Heart right ventricle (tissue), 16 donors: ENCODE measurements at regions of chr7 and their contacts with region 1.

Region 1: GRCh38 chr7:40329601-40330153 is 194.9 kb downstream of the SUGCT start:
- DNase-seq: no peak
- ATAC-seq: peak in 5 of 8 donors; percentile 29 to 58 (median 45)
- H3K4me3 ChIP-seq: no peak overlapping the region
- H3K27ac ChIP-seq: no peak overlapping the region
- H3K4me1 ChIP-seq: peaks cover 0 to 4% (median 0%) of the 10 kb centered on the region in 9 donors
- H3K27me3 ChIP-seq: no peaks in the 10 kb centered on the region
- CTCF ChIP-seq: peak; percentile 55 to 82 (median 79)

Region 2: GRCh38 chr7:40604601-40605438 is 275.1 kb after region 1 on chr7:
- intact Hi-C with region 1: loop called in 3 of 10 experiments (anchors 5 to 10 kb)
- DNase-seq: peak; percentile 21 to 45
- ATAC-seq: peak; percentile 67 to 90 (median 74)
- H3K4me3 ChIP-seq: no peak overlapping the region
- H3K27ac ChIP-seq: no peak overlapping the region
- H3K4me1 ChIP-seq: peaks cover 0 to 7% (median 0%) of the 10 kb centered on the region in 9 donors
- H3K27me3 ChIP-seq: no peaks in the 10 kb centered on the region
- CTCF ChIP-seq: peak; percentile 32 to 75 (median 63)

Region 3: DNA sequence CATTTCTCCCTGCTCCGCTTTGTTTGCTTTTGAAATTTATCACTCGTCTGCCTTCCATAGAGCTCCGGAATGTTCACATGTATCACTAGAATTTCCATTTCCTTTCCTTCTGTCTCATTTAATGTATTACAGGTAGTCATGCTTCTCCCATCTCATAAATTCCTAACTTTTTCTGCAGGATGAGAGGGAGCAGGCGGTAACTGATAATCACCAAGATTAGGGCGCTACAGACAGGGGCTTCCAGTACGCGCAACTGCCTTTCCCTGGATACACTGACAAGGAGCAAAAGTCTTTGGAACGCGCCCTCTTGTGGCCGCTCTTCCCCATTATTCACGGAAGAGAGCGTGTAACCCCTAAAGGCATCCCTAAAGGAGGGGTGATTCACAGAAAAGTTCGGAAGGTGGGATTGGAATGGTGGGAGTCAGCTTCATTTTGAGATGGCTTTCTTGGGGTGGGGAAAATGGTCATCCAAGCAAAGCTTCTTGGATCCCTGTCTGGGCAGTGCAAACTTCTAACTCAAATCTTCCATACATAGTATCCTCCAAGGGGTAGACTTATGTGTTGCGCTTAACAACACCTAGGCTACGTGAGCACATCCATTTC is 1366.7 kb after region 1 on chr7:
- intact Hi-C with region 1: loop called in 3 of 10 experiments (anchors 2 to 10 kb)
- DNase-seq: peak; percentile 72 to 79
- ATAC-seq: peak; percentile 67 to 83 (median 74)
- H3K4me3 ChIP-seq: peak overlapping the region in 8 of 10 donors; percentile 21 to 64 (median 50)
- H3K27ac ChIP-seq: peak overlapping the region in 7 of 10 donors; percentile 24 to 82 (median 54)
- H3K4me1 ChIP-seq: peaks cover 0 to 55% (median 29%) of the 10 kb centered on the region in 9 donors
- H3K27me3 ChIP-seq: peaks cover 0 to 20% (median 5%) of the 10 kb centered on the region in 7 donors
- CTCF ChIP-seq: peak; percentile 55 to 79 (median 74)

Region 4: DNA sequence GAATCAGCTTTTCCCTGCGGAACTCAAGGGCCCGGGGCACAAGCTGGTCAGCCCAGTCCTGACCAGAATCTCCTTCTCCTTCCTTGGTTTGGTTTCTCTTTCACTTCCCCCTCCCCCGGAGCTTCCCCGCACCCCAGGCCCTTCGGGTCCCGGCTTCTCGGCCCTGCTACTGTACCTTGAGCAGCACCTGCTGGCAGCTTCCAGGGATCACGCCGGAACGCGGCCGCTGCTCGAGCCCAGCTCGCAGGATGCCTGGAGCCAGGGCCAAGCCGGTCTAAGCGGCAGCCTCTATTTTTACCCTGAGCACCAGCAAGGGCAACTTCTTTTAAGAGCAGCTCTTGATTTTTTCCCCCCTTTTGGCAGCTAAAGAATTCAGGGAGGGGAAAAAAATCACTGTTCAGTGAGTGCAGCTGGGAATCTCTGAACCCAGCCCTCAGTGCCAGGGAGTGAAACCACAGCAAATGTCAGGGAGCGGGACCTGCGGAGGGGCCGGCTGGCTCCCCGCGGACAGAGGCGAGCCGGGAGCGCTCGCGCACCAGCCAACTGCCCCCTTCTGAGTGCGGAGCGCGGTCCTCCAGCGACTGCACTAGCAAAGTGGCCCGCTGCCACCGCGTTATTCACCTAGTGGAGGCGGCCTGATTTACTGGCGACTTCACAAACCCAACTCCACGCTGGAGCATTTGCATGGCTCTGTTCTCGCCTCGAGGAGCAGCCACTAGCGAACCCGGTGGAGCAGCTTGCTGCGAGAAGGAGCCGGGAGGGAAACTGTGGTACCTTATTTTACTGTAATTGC is 1375.6 kb after region 1 on chr7:
- intact Hi-C with region 1: loop called in 6 of 10 experiments (anchors 2 to 10 kb)
- DNase-seq: peak; percentile 82 to 86
- ATAC-seq: peak; percentile 87 to 98 (median 94)
- H3K4me3 ChIP-seq: peak overlapping the region; percentile 7 to 65 (median 56)
- H3K27ac ChIP-seq: peak overlapping the region in 9 of 10 donors; percentile 10 to 88 (median 78)
- H3K4me1 ChIP-seq: peaks cover 0 to 24% (median 7%) of the 10 kb centered on the region in 9 donors
- H3K27me3 ChIP-seq: peaks cover 0 to 7% (median 0%) of the 10 kb centered on the region in 7 donors
- CTCF ChIP-seq: peak; percentile 30 to 78 (median 68)

Region 5: DNA sequence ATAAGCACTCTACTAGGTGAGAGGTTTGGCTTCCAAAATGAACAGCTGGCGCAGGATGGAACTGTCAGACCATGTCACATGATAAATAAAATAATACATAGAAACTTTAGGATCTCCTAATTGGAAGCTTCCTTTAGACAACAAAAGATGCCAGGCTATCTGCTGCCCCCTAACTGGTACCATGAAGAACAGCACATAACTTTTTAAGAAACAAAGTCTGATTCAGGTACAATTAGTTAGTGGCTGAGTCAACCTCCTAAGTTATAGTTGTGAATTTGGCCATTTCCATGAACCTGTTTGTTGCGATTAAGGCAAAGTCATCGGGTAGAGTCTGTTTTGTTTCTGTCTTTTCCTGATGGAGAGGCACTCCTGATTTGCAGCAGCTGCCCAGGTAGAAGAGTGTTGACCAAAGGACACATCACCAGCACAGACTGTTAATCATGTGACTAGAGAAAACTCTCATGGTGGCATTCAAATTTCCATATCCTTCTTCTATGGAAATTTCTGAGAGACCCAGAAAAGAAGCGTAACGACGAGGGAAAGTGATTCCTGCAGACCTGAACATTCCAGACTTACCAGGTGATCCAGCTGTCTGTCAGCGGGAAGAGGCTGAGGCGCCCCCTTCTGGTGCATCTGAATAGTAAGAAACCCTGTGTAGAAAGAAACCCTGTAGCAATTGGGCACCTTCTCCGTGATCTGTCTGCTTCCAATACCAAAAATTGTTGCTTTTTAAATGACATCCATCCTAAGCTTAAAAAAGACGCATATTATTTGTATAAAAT is 1381.8 kb after region 1 on chr7:
- intact Hi-C with region 1: loop called in 7 of 10 experiments (anchors 2 to 10 kb)
- DNase-seq: no peak
- ATAC-seq: no peak
- H3K4me3 ChIP-seq: no peak overlapping the region
- H3K27ac ChIP-seq: no peak overlapping the region
- H3K4me1 ChIP-seq: peaks cover 0 to under 1% (median 0%) of the 10 kb centered on the region in 9 donors
- H3K27me3 ChIP-seq: no peaks in the 10 kb centered on the region
- CTCF ChIP-seq: peak in 7 of 9 donors; percentile 18 to 55 (median 40)

Region 6: GRCh38 chr7:41716691-41717090 is 1387.0 kb after region 1 on chr7:
- intact Hi-C with region 1: loop called in 7 of 10 experiments (anchors 2 to 10 kb)
- DNase-seq: no peak
- ATAC-seq: no peak
- H3K4me3 ChIP-seq: no peak overlapping the region
- H3K27ac ChIP-seq: no peak overlapping the region
- H3K4me1 ChIP-seq: no peaks in the 10 kb centered on the region
- H3K27me3 ChIP-seq: no peaks in the 10 kb centered on the region
- CTCF ChIP-seq: no peak

Region 7: GRCh38 chr7:41725013-41725412 is 1395.3 kb after region 1 on chr7:
- intact Hi-C with region 1: loop called in 1 of 10 experiments (anchors 10 kb)
- DNase-seq: no peak
- ATAC-seq: no peak
- H3K4me3 ChIP-seq: no peak overlapping the region
- H3K27ac ChIP-seq: no peak overlapping the region
- H3K4me1 ChIP-seq: no peaks in the 10 kb centered on the region
- H3K27me3 ChIP-seq: peaks cover 0 to 2% (median 0%) of the 10 kb centered on the region in 7 donors
- CTCF ChIP-seq: no peak